Mammary epithelial cell (primary cell): ENCODE measurements at regions of chr16 and their contacts with region 1.

Region 1: GRCh38 chr16:68936736-68937631 is 93.7 kb downstream of the TANGO6 start:
- DNase-seq: peak; percentile 98
- H3K4me3 ChIP-seq: peak overlapping the region in 1 of 3 experiments; percentile 16
- H3K27ac ChIP-seq: peak overlapping the region; percentile 58
- H3K4me1 ChIP-seq: peaks cover 39% of the 10 kb centered on the region
- H3K27me3 ChIP-seq: no peaks in the 10 kb centered on the region
- CTCF ChIP-seq: no peak

Region 2: GRCh38 chr16:68866933-68867332 is 70.1 kb before region 1 on chr16:
- CTCF ChIA-PET with region 1: no interaction called
- dilution Hi-C with region 1: no loop called
- in situ Hi-C with region 1: no loop called
- intact Hi-C with region 1: no loop called
- DNase-seq: no peak
- H3K4me3 ChIP-seq: no peak overlapping the region
- H3K27ac ChIP-seq: no peak overlapping the region
- H3K4me1 ChIP-seq: no peaks in the 10 kb centered on the region
- H3K27me3 ChIP-seq: no peaks in the 10 kb centered on the region
- CTCF ChIP-seq: no peak

Region 3: GRCh38 chr16:68921654-68922053 is 15.3 kb before region 1 on chr16:
- CTCF ChIA-PET with region 1: no interaction called
- dilution Hi-C with region 1: no loop called
- in situ Hi-C with region 1: no loop called
- intact Hi-C with region 1: loop called (anchors 1 kb)
- DNase-seq: peak; percentile 96
- H3K4me3 ChIP-seq: no peak overlapping the region
- H3K27ac ChIP-seq: peak overlapping the region; percentile 89
- H3K4me1 ChIP-seq: peaks cover 43% of the 10 kb centered on the region
- H3K27me3 ChIP-seq: no peaks in the 10 kb centered on the region
- CTCF ChIP-seq: no peak

Region 4: DNA sequence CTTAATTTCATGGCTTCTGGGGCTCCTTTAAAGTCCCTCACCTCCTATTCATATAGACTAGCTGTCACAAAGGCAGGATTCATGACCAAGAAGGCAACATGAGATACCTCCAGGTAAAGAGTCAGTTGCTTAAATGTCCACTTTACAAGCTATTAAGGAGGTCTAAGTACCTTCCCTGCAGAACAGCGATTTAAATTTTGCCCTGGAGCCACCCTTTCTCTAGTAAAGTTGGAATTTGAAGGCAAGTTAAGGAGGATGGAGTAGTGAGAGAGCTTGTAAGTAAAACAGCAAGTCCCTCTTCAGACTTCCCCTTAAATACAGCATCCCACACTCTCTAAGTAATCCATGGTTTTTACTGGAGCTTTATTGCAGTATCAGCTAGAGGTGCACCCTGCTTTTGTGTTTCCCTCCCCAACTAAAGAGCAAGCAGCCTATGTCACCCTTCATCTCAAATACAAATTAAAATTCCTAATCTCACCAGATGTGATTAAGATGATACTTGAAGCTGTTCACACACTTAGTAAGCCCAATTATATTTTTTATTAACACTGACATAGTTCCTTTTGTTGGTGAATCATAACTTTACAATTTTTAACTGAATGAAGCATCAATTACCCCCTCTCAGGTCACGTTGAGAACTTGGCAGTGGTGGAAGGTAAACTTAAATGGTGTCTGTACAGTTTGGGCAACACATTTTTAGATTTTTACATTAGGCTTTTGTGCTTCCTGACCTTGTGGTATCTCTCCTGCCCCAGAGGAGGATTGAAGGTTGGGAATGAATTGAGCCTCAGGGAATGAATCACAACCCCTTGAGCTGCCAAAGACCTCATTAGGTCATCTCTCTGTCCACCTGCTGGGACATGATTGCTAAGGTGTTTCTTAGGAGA is 15.2 kb after region 1 on chr16:
- CTCF ChIA-PET with region 1: no interaction called
- dilution Hi-C with region 1: no loop called
- in situ Hi-C with region 1: no loop called
- intact Hi-C with region 1: no loop called
- DNase-seq: peak; percentile 94
- H3K4me3 ChIP-seq: no peak overlapping the region
- H3K27ac ChIP-seq: peak overlapping the region; percentile 79
- H3K4me1 ChIP-seq: peaks cover 20% of the 10 kb centered on the region
- H3K27me3 ChIP-seq: no peaks in the 10 kb centered on the region
- CTCF ChIP-seq: no peak